ENCODE measurements at regions of chr17 and their contacts with region 1.

Region 1: GRCh38 chr17:10013365-10014221 is 108.5 kb upstream of the RCVRN start:
- DNase-seq: peak; percentile 30
- H3K4me3 ChIP-seq: no peak overlapping the region
- H3K27ac ChIP-seq: peak overlapping the region; percentile 14 to 63 (median 38)
- H3K4me1 ChIP-seq: peaks cover 0 to 15% (median 0%) of the 10 kb centered on the region in 4 donors
- H3K27me3 ChIP-seq: no peaks in the 10 kb centered on the region
- CTCF ChIP-seq: no peak
- EP300 ChIP-seq: no peak
- POLR2A ChIP-seq: no peak

Region 2: DNA sequence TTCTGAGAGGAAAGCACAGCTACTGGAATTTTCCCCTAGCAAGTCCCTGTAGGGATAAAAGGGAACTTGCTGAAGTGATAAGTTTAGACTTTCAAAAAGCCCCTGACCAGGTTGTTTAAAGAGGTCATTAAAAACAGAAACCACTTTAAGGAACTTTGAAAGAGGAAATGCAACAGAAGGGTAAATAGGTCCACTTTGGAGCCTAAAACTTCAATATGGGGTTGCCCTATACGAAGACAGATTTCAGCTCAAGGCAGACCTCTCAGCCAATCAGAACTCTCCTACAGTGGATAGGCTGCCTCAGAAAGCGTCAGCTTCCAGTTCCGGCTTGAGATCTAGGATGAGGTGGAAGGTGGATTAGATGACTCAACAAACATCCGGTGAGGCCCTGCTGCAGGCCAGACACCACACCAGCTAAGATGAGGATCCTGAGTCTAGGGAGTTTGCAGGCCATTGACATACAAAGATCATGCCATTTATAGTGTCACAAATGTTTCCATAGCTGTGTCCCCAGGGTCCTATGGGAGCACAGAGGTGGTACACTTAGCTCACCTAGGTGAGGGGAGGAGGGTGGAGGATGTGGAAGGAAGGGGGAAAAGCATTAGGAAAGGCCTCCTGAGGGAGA is 1206.6 kb before region 1 on chr17:
- in situ Hi-C with region 1: no loop called
- intact Hi-C with region 1: loop called (anchors 5 kb)
- DNase-seq: no peak
- H3K4me3 ChIP-seq: no peak overlapping the region
- H3K27ac ChIP-seq: peak overlapping the region in 2 of 4 donors; percentile 39 to 41
- H3K4me1 ChIP-seq: peaks cover 0 to 5% (median 0%) of the 10 kb centered on the region in 4 donors
- H3K27me3 ChIP-seq: peaks cover 7% of the 10 kb centered on the region
- CTCF ChIP-seq: no peak
- EP300 ChIP-seq: no peak
- POLR2A ChIP-seq: no peak

Region 3: DNA sequence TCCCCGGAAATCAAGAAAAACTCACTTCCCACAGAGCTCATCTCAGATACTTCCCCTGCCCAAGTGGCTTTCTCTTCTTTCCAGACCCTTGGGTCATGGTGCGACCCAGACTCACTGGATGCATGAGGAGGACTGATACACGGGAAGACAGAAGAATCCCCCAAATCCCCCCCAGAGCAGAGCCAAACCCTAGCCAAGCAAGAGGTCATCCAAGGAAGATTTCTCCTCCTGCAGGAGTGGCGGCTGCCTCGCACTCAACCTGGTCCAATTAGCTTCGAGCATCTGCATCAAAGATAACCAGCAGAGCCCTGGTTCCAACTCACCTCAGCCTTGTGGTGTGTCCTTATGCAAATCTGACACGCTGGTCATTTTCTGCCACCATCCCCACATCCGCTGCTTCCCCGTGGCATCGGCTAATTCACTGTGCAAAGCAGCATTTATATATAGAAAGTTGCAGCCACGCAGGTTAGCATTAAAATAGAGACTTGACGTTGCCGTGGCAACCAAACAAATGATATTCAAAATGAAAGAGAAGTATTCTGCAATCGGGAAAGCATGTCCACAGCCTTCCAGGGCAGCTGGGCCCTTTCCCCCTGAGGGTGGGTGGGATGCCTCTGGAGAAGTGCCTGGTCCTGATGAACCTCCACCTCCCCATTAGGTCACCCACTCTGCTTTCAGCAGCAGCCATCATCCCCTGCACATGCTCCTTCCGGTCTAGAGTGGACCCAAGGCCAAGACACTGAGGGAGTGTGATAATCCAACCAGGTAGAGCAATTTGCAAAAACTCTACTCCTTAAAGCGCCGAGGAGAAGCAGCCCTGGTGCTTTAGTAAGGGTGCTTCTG is 46.0 kb after region 1 on chr17:
- in situ Hi-C with region 1: no loop called
- intact Hi-C with region 1: no loop called
- DNase-seq: peak; percentile 41
- H3K4me3 ChIP-seq: no peak overlapping the region
- H3K27ac ChIP-seq: peak overlapping the region in 2 of 4 donors; percentile 55 to 68
- H3K4me1 ChIP-seq: peaks cover 0 to 20% (median 8%) of the 10 kb centered on the region in 4 donors
- H3K27me3 ChIP-seq: no peaks in the 10 kb centered on the region
- CTCF ChIP-seq: no peak
- EP300 ChIP-seq: no peak
- POLR2A ChIP-seq: no peak